H1 (cell line): ENCODE measurements at regions of chr12 and their contacts with region 1.

Region 1: DNA sequence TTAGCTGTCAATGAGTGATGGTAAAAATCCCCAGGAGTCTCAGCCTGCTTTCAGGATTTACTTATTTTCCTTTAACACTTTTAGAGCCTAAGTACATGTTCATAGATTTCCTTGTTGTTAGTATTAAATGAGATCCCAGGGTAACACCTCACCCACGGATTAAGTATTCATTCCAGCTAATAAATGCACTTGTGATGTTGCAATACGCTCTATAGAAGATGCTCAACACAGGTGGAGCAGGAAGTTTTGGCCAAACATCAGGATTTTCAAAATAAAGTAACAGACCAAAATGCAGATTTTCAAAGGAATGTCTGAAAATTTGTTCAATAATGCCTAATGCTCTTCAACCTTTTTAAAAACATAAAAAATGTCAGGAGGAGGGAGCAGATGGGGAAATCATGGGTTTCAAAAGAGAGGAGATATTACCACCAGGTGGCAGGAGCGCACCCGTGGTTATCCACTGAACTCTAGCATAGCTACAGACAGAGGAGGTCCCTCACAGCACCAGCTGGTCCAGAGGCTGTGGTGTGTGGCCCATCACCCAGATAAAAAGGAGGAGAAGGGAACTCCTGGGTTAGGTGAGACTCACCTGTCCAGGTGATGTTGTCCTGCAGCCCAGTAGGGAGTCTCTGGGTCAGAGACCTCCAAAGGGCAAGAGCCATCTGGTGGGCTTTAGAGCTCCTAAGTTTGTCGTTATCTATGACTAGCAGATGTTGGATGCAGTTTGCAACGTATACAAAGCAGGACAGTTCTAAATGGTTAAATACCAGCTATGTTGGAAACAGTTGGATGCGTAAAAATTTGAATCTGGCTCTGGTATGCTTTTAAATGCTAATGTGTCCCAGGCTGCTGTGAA is 1158.4 kb upstream of the TMEM132C start:
- DNase-seq: peak in 1 of 2 experiments; percentile 64
- H3K4me3 ChIP-seq: no peak overlapping the region
- H3K27ac ChIP-seq: no peak overlapping the region
- H3K4me1 ChIP-seq: peaks cover 0 to 3% (median 0%) of the 10 kb centered on the region in 4 experiments; a peak in 4 of 7 replicates
- H3K27me3 ChIP-seq: no peaks in the 10 kb centered on the region
- CTCF ChIP-seq: peak; percentile 44 to 75 (median 65)
- EP300 ChIP-seq: no peak
- POLR2A ChIP-seq: no peak
- RAD21 ChIP-seq: peak; percentile 86

Region 2: DNA sequence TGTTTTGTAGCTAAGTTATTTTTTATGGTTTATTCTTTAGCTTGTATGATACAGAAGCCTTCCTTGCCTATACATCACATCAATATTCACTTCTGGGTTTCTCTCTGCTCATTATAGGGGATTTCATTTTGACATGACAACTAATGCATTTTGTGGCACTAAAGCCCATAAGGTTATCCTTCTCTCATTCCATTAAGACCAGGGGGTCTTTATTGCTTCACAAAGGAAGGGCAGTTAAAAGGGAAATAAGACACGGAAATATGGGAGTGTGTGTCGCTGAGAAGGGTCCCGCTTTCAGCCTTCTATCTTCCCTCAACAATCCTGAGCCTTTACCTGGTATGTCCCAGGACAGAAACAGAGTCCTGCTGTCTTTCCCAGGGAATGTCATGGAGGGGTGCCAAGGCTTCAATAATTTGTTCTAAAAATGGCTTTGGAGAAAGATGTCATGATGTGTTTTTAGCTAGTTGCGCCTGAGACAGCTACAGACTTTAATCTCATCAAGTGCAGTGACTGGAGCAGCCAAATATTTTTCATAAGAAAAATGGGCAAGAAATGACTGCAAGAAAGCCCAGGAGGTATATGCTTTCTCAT is 13.0 kb after region 1 on chr12:
- CTCF ChIA-PET with region 1: interaction called, 19 read pairs
- POLR2A ChIA-PET with region 1: no interaction called
- DNase-seq: no peak
- H3K4me3 ChIP-seq: no peak overlapping the region
- H3K27ac ChIP-seq: no peak overlapping the region
- H3K4me1 ChIP-seq: no peaks in the 10 kb centered on the region; a peak in 1 of 7 replicates
- H3K27me3 ChIP-seq: no peaks in the 10 kb centered on the region
- CTCF ChIP-seq: no peak
- EP300 ChIP-seq: no peak
- POLR2A ChIP-seq: no peak
- RAD21 ChIP-seq: no peak

Region 3: DNA sequence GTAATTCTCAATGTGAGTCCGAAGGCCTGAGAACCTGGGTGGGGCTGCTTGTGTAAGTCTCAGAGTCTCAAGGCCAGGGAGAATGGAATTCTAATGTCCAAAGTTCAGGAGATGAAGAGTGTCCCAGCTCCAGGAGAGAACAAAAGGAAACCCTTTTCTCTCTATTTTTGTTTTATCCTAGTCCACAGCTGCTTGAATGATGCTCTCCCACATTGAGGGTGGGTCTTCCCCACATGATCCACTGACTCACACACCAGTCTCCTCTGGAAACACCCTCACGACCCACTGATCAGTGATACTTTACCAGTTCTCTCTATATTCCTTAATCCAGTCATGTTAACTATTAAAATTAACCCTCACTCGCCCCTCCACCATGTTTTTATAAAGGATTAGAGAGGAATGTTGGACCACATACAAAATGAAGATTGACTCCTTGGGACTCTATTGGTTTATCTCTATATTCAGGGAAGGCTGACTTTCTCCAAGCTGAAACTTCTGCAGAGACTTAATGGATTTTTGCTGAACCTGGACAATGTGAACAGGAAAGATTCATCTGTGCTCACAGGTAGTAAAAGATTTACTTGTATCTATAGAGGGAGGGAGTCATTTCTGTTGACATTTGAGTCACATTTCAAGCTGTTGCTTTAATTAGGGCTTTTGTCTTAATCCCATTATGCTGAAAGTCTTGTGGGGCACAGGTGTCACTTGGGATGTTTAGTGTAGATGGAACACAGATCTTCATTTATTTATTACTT is 97.4 kb after region 1 on chr12:
- CTCF ChIA-PET with region 1: no interaction called
- POLR2A ChIA-PET with region 1: no interaction called
- DNase-seq: no peak
- H3K4me3 ChIP-seq: no peak overlapping the region
- H3K27ac ChIP-seq: no peak overlapping the region
- H3K4me1 ChIP-seq: no peaks in the 10 kb centered on the region
- H3K27me3 ChIP-seq: no peaks in the 10 kb centered on the region
- CTCF ChIP-seq: no peak
- EP300 ChIP-seq: no peak
- POLR2A ChIP-seq: no peak
- RAD21 ChIP-seq: no peak

Region 4: GRCh38 chr12:127287256-127287655 is 178.7 kb after region 1 on chr12:
- CTCF ChIA-PET with region 1: interaction called, 43 read pairs
- POLR2A ChIA-PET with region 1: no interaction called
- DNase-seq: no peak
- H3K4me3 ChIP-seq: no peak overlapping the region
- H3K27ac ChIP-seq: no peak overlapping the region
- H3K4me1 ChIP-seq: no peaks in the 10 kb centered on the region
- H3K27me3 ChIP-seq: no peaks in the 10 kb centered on the region
- CTCF ChIP-seq: no peak
- EP300 ChIP-seq: no peak
- POLR2A ChIP-seq: no peak
- RAD21 ChIP-seq: no peak

Region 5: DNA sequence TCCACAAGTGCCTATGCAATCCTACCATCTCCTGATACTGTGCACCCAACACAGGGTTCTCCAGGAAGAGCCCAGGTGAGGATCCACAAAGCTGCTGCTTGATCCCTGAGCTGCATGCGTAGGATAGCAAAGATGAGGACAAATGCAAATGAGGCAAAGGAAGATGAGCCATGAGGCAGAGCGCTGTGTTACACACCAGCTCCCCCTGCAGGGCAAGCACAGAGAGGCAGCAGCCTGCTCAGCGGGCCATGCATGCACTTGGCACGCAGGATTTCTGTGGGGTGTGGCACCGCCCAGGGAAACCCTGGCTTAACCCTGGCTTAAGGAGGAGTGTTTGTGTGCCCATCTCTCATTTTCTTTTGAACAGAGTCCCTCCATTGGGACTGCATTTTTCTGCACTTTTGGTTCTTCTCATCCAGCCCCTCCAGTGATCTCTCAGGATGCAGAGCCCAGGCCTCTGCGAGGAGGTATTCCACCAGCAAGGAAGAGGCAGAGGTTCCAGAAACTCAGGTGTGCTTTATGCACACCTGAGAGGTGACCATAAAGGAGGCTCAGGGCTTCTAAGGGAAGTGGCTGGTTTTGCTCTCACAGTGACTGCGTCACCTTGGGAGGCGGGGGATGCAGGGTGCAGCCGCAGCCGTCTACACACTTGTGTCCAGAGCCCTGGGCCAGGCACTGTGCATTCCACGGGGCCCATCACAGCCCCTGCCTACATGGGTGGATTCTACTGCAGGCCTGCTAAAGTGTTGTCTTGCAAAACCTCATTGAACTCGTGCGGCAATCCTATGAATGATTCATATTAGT is 185.1 kb after region 1 on chr12:
- CTCF ChIA-PET with region 1: interaction called, 26 read pairs
- POLR2A ChIA-PET with region 1: no interaction called
- DNase-seq: peak; percentile 44 to 87
- H3K4me3 ChIP-seq: no peak overlapping the region
- H3K27ac ChIP-seq: no peak overlapping the region
- H3K4me1 ChIP-seq: no peaks in the 10 kb centered on the region
- H3K27me3 ChIP-seq: no peaks in the 10 kb centered on the region
- CTCF ChIP-seq: peak; percentile 87 to 99 (median 99)
- EP300 ChIP-seq: no peak
- POLR2A ChIP-seq: no peak
- RAD21 ChIP-seq: peak; percentile 92 to 93

Region 6: GRCh38 chr12:127355061-127355841 is 246.7 kb after region 1 on chr12:
- CTCF ChIA-PET with region 1: interaction called, 27 read pairs
- POLR2A ChIA-PET with region 1: no interaction called
- DNase-seq: peak in 1 of 2 experiments; percentile 53
- H3K4me3 ChIP-seq: no peak overlapping the region
- H3K27ac ChIP-seq: no peak overlapping the region
- H3K4me1 ChIP-seq: no peaks in the 10 kb centered on the region; a peak in 1 of 7 replicates
- H3K27me3 ChIP-seq: no peaks in the 10 kb centered on the region
- CTCF ChIP-seq: peak; percentile 76 to 83 (median 77)
- EP300 ChIP-seq: no peak
- POLR2A ChIP-seq: no peak
- RAD21 ChIP-seq: peak; percentile 76 to 81

Region 7: GRCh38 chr12:127381048-127381668 is 272.6 kb after region 1 on chr12:
- CTCF ChIA-PET with region 1: interaction called, 19 read pairs
- POLR2A ChIA-PET with region 1: no interaction called
- DNase-seq: peak; percentile 21 to 90
- H3K4me3 ChIP-seq: peak overlapping the region in 1 of 4 experiments; percentile 48; a peak in 4 of 8 replicates
- H3K27ac ChIP-seq: no peak overlapping the region
- H3K4me1 ChIP-seq: no peaks in the 10 kb centered on the region
- H3K27me3 ChIP-seq: no peaks in the 10 kb centered on the region
- CTCF ChIP-seq: peak; percentile 82 to 93 (median 89)
- EP300 ChIP-seq: peak in 1 of 2 experiments; percentile 15; a peak in 1 of 3 replicates
- POLR2A ChIP-seq: no peak
- RAD21 ChIP-seq: peak; percentile 93 to 96